Heart left ventricle (tissue), 16 donors: ENCODE measurements at regions of chr5 and their contacts with region 1.

Region 1: DNA sequence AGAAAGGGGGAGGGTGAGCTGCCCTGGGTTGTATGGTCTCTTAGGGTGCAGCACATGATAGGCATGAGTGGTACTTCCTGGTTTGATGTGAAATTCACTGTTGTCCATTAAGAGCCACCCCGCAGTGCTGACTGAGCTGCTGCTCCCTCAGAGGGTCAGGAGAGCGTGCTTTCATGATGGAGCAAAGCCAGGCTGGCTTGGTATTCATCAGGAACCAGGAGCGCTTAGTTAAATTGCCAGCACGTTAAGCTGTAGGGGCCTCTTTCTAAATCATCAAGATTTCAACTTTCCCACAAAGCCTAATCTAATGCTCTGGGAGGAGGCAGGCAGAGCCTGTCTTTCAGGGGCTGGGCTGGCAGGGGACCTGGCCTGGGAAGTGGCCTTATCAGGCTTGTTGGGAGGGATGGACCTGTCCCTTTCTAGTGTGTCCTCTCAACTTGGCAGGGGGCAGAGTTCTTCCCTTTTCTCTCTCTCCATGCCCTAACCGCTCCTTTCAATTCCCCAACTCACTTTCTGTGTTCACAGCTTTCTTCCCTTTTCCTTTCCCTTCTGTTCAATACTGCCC is 7.9 kb downstream of the CYSTM1 start:
- DNase-seq: peak in 4 of 5 donors; percentile 39 to 62 (median 42)
- ATAC-seq: peak; percentile 54 to 76 (median 68)
- H3K4me3 ChIP-seq: no peak overlapping the region
- H3K27ac ChIP-seq: peak overlapping the region in 11 of 12 donors; percentile 14 to 80 (median 67)
- H3K4me1 ChIP-seq: peaks cover 0 to 67% (median 51%) of the 10 kb centered on the region in 12 donors
- H3K27me3 ChIP-seq: no peaks in the 10 kb centered on the region
- CTCF ChIP-seq: no peak
- POLR2A ChIP-seq: no peak

Region 2: GRCh38 chr5:140011297-140011802 is 171.5 kb before region 1 on chr5:
- intact Hi-C with region 1: no loop called
- DNase-seq: peak in 4 of 5 donors; percentile 56 to 71 (median 67)
- ATAC-seq: peak; percentile 96 to 98 (median 96)
- H3K4me3 ChIP-seq: no peak overlapping the region
- H3K27ac ChIP-seq: peak overlapping the region; percentile 50 to 85 (median 75)
- H3K4me1 ChIP-seq: peaks cover 0 to 30% (median 12%) of the 10 kb centered on the region in 12 donors
- H3K27me3 ChIP-seq: peaks cover 0 to 6% (median 0%) of the 10 kb centered on the region in 9 donors
- CTCF ChIP-seq: no peak
- POLR2A ChIP-seq: no peak

Region 3: GRCh38 chr5:140214831-140215230 is 31.9 kb after region 1 on chr5:
- intact Hi-C with region 1: loop called in 4 of 10 experiments (anchors 5 kb)
- DNase-seq: no peak
- ATAC-seq: peak in 1 of 4 donors; percentile 15
- H3K4me3 ChIP-seq: no peak overlapping the region
- H3K27ac ChIP-seq: no peak overlapping the region
- H3K4me1 ChIP-seq: peaks cover 0 to 58% (median 43%) of the 10 kb centered on the region in 12 donors
- H3K27me3 ChIP-seq: no peaks in the 10 kb centered on the region
- CTCF ChIP-seq: no peak
- POLR2A ChIP-seq: no peak

Region 4: DNA sequence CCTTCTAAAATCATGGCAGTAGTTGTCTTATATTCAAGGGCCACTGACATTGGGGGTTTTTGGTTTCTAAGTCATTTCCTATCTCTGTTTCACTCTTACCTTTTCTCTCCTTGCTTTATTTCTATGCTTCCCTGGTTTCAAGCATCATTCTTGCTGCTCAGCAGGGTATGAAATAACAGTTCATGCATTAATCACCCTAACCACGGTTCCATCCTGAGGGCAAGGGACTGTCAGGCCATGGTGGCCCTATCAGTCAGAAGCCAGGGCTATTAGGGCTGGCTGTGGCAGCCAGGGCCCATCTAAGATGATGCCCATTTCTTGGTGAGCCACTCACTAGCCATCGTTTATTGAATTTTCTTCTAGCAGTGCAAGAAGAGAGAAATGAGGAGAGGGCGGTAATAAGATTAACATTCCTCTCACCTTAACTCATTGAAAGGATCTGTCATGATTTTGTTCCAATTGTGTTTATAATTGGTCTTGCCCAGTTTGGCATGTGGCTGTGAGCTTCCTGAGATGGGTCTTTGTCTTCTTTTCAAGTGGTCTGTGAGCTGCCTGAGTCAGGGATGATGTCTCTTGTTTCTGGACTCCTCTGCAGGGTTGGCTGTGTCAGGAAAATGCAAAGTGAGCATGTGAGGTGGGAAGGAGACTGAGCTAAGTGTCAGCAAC is 37.3 kb after region 1 on chr5:
- intact Hi-C with region 1: loop called in 5 of 10 experiments (anchors 5 kb)
- DNase-seq: no peak
- ATAC-seq: no peak
- H3K4me3 ChIP-seq: no peak overlapping the region
- H3K27ac ChIP-seq: peak overlapping the region; percentile 34 to 87 (median 58)
- H3K4me1 ChIP-seq: peaks cover 5 to 94% (median 72%) of the 10 kb centered on the region in 12 donors
- H3K27me3 ChIP-seq: no peaks in the 10 kb centered on the region
- CTCF ChIP-seq: no peak
- POLR2A ChIP-seq: no peak

Region 5: GRCh38 chr5:140227048-140227447 is 44.2 kb after region 1 on chr5:
- intact Hi-C with region 1: loop called in 6 of 10 experiments (anchors 5 to 10 kb)
- DNase-seq: no peak
- ATAC-seq: no peak
- H3K4me3 ChIP-seq: no peak overlapping the region
- H3K27ac ChIP-seq: peak overlapping the region in 3 of 12 donors; percentile 8 to 77 (median 55)
- H3K4me1 ChIP-seq: peaks cover 5 to 59% (median 28%) of the 10 kb centered on the region in 12 donors
- H3K27me3 ChIP-seq: no peaks in the 10 kb centered on the region
- CTCF ChIP-seq: no peak
- POLR2A ChIP-seq: no peak

Region 6: DNA sequence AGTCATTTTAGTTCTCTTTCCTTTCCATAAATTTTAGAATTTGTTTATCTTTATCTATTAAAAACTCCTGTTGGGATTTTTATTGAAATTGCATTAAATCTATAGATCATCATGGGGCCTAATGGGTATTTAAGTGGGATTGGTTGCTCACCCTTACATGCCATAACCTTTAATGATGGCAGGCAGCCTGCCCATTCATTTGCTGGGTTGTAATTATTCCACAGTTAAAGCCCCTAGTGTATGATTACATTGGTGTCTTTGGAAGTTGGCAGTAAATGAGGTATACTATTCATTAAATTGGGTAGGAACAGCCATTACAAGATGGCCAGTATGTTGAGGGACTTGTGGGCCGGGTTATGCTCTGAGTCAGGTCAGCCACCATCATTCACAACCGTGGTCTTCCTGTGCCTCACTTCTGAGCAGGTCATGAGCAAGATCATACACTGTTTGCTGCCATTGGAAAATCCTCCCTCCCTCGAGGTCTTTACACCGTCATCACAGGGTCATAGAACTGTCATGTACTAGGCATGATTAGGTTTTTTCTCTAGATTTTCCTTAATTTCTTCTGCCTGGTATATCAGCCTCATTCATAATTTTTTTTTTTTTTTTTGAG is 51.6 kb after region 1 on chr5:
- intact Hi-C with region 1: loop called in 3 of 10 experiments (anchors 5 to 10 kb)
- DNase-seq: no peak
- ATAC-seq: no peak
- H3K4me3 ChIP-seq: no peak overlapping the region
- H3K27ac ChIP-seq: no peak overlapping the region
- H3K4me1 ChIP-seq: peaks cover 0 to 22% (median 6%) of the 10 kb centered on the region in 12 donors
- H3K27me3 ChIP-seq: no peaks in the 10 kb centered on the region
- CTCF ChIP-seq: no peak
- POLR2A ChIP-seq: no peak